ENCODE measurements at regions of chr17 and their contacts with region 1.

Region 1: GRCh38 chr17:3913531-3914311 is 2.5 kb downstream of the P2RX1 start:
- DNase-seq: peak; percentile 90
- ATAC-seq: peak; percentile 66
- H3K4me3 Mint-ChIP-seq: peak overlapping the region; percentile 20
- H3K27ac Mint-ChIP-seq: peak overlapping the region; percentile 55
- H3K4me1 Mint-ChIP-seq: peaks cover 63% of the 10 kb centered on the region
- H3K27me3 Mint-ChIP-seq: no peaks in the 10 kb centered on the region
- CTCF ChIP-seq: peak; percentile 94

Region 2: GRCh38 chr17:3845621-3846441 is 67.9 kb before region 1 on chr17 and contains the start of gene NCBP3:
- CTCF ChIA-PET with region 1: interaction called, 20 read pairs
- POLR2A ChIA-PET with region 1: interaction called, 3 read pairs
- intact Hi-C with region 1: no loop called
- DNase-seq: peak; percentile 90
- ATAC-seq: peak; percentile 94
- H3K4me3 Mint-ChIP-seq: peak within 1 kb of the TSS; percentile 96
- H3K27ac Mint-ChIP-seq: peak within 1 kb of the TSS; percentile 93
- H3K4me1 Mint-ChIP-seq: peaks cover 25% of the 10 kb centered on the region
- H3K27me3 Mint-ChIP-seq: peaks cover 2% of the 10 kb centered on the region
- CTCF ChIP-seq: peak; percentile 87
- total RNA-seq, gene NCBP3: 34.7 to 41.1 TPM

Region 3: DNA sequence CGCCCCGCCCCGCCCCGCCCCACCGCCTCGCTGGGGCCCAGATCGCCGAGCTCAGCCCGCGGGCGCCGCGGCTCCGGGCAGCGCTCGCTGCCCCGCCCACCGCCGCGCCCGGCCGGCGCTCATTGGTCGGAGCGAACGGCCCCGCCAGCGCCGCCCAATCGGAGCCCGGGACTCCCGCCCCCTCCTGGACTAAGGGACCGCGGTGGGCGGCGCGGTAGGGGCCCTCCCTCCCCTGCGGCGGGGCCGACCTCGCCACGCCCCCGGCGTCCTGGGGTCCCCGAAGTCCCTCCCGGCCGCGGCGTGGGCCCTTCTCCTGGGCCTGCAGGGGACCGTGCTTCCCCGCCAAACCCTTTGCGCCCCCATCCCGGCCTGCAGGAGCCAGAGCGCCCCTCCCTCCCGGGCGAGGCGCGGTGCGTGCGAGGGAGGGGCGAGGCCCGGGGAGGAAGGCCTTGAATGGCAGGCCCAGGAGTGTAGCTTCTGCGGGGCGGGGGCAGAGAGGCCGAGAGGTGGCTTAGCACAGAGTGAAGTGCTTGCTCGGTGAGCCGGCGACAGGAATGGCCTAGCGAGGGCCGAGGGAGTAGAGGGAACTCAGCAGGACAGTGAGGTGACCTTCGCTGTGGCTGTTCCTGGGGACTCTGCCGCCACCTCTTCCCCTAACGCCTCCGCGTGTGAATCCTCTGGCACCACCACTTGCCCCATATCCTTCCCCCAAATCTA is 20.6 kb before region 1 on chr17 and contains the start of gene CAMKK1:
- CTCF ChIA-PET with region 1: interaction called, 21 read pairs
- POLR2A ChIA-PET with region 1: interaction called, 9 read pairs
- intact Hi-C with region 1: no loop called
- DNase-seq: peak; percentile 90
- ATAC-seq: peak; percentile 89
- H3K4me3 Mint-ChIP-seq: peak within 1 kb of the TSS; percentile 82
- H3K27ac Mint-ChIP-seq: peak within 1 kb of the TSS; percentile 84
- H3K4me1 Mint-ChIP-seq: peaks cover 31% of the 10 kb centered on the region
- H3K27me3 Mint-ChIP-seq: no peaks in the 10 kb centered on the region
- CTCF ChIP-seq: no peak
- total RNA-seq, gene CAMKK1: 6.7 to 6.9 TPM

Region 4: GRCh38 chr17:3990386-3991127 is 76.8 kb after region 1 on chr17:
- CTCF ChIA-PET with region 1: interaction called, 11 read pairs
- POLR2A ChIA-PET with region 1: no interaction called
- intact Hi-C with region 1: no loop called
- DNase-seq: no peak
- ATAC-seq: no peak
- H3K4me3 Mint-ChIP-seq: no peak overlapping the region
- H3K27ac Mint-ChIP-seq: no peak overlapping the region
- H3K4me1 Mint-ChIP-seq: no peaks in the 10 kb centered on the region
- H3K27me3 Mint-ChIP-seq: no peaks in the 10 kb centered on the region
- CTCF ChIP-seq: no peak

Region 5: DNA sequence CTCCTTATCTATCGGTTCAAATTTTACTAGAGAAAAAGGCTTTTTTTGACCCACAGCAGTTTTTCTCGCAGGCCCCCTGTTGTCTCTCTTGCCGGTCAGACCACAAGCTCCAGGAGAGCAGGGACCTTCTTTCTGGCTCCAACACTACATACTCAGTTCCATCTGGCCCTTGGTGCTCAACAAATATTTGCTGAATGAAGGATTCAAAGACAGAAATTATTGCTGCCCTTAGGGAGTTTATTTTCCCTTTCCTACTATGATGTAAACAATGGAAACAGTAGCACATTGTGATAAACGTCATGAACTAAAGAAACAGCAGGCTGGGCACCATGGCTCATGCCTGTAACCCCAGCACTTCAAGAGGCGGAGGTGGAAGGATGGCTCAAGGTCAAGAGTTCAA is 109.5 kb after region 1 on chr17:
- CTCF ChIA-PET with region 1: no interaction called
- POLR2A ChIA-PET with region 1: no interaction called
- intact Hi-C with region 1: no loop called
- DNase-seq: no peak
- ATAC-seq: no peak
- H3K4me3 Mint-ChIP-seq: no peak overlapping the region
- H3K27ac Mint-ChIP-seq: no peak overlapping the region
- H3K4me1 Mint-ChIP-seq: no peaks in the 10 kb centered on the region
- H3K27me3 Mint-ChIP-seq: no peaks in the 10 kb centered on the region
- CTCF ChIP-seq: no peak

Region 6: GRCh38 chr17:4074831-4075495 is 161.2 kb after region 1 on chr17:
- CTCF ChIA-PET with region 1: interaction called, 18 read pairs
- POLR2A ChIA-PET with region 1: no interaction called
- intact Hi-C with region 1: no loop called
- DNase-seq: no peak
- ATAC-seq: peak; percentile 75
- H3K4me3 Mint-ChIP-seq: no peak overlapping the region
- H3K27ac Mint-ChIP-seq: no peak overlapping the region
- H3K4me1 Mint-ChIP-seq: no peaks in the 10 kb centered on the region
- H3K27me3 Mint-ChIP-seq: no peaks in the 10 kb centered on the region
- CTCF ChIP-seq: peak; percentile 80

Measured in activated CD8-positive, alpha-beta T cell treated with anti-CD3 and anti-CD28 coated beads for 36 hours (primary cell).